Naive thymus-derived CD8-positive, alpha-beta T cell (primary cell): ENCODE measurements at regions of chr1 and their contacts with region 1.

Region 1: GRCh38 chr1:36463803-36464604 is at the start of gene MRPS15:
- DNase-seq: peak; percentile 84 to 96 (median 92)
- ATAC-seq: peak; percentile 95 to 97
- H3K4me3 Mint-ChIP-seq: peak within 1 kb of the TSS; percentile 95 to 100 (median 98)
- H3K27ac Mint-ChIP-seq: peak within 1 kb of the TSS; percentile 95 to 99 (median 98)
- H3K4me1 Mint-ChIP-seq: peaks cover 12 to 36% (median 32%) of the 10 kb centered on the region in 4 donors
- H3K27me3 Mint-ChIP-seq: no peaks in the 10 kb centered on the region
- polyA plus RNA-seq, gene MRPS15: 87.2 to 95.9 (median 87.7) TPM

Region 2: DNA sequence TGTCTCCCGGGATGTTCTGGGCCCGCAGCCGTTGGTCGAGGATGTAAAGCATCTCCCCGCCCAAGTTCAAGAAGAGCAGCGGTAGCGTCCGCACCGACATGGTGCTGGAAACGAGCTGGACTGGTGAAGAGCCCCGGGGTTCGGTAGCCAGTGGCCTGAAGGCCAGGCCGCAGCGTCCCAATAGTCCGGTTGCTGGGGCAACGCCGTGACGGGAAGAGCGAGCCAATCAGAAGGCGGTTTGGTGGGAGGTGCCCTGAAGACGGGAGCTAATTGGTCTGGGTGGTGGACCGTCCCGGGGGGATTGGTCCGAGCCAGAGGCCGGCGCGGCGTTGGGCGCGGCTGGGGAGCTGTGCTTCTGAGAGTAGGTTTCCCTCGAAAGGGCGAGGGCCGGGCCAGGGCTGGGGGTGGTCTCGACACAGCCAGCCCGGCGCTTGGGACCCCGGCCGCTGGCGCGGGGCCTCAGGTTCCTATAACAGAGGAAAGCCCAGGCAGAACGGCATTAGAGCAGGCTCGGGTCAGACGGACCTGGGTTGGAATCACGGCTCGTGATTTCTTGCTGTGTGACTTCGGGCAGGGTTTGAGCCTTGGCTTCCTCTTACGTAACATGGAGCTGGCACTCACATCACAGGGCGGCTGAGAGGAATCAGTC is 13.6 kb before region 1 on chr1 and contains the start of gene OSCP1:
- POLR2A ChIA-PET with region 1: interaction called, 35 read pairs
- DNase-seq: peak; percentile 77 to 93 (median 83)
- ATAC-seq: peak; percentile 97 to 98
- H3K4me3 Mint-ChIP-seq: peak within 1 kb of the TSS; percentile 87 to 97 (median 92)
- H3K27ac Mint-ChIP-seq: peak within 1 kb of the TSS; percentile 90 to 99 (median 98)
- H3K4me1 Mint-ChIP-seq: peaks cover 13 to 23% (median 20%) of the 10 kb centered on the region in 4 donors
- H3K27me3 Mint-ChIP-seq: peaks cover 0 to 3% (median 0%) of the 10 kb centered on the region in 5 donors
- polyA plus RNA-seq, gene OSCP1: 0.24 to 1.7 (median 0.94) TPM